Activated CD8-positive, alpha-beta T cell treated with anti-CD3 and anti-CD28 coated beads, Interleukin-2, amount 10 ng/mL, durations not matched to agents 7 days and 5 days (primary cell): ENCODE measurements at regions of chr14 and their contacts with region 1.

Region 1: DNA sequence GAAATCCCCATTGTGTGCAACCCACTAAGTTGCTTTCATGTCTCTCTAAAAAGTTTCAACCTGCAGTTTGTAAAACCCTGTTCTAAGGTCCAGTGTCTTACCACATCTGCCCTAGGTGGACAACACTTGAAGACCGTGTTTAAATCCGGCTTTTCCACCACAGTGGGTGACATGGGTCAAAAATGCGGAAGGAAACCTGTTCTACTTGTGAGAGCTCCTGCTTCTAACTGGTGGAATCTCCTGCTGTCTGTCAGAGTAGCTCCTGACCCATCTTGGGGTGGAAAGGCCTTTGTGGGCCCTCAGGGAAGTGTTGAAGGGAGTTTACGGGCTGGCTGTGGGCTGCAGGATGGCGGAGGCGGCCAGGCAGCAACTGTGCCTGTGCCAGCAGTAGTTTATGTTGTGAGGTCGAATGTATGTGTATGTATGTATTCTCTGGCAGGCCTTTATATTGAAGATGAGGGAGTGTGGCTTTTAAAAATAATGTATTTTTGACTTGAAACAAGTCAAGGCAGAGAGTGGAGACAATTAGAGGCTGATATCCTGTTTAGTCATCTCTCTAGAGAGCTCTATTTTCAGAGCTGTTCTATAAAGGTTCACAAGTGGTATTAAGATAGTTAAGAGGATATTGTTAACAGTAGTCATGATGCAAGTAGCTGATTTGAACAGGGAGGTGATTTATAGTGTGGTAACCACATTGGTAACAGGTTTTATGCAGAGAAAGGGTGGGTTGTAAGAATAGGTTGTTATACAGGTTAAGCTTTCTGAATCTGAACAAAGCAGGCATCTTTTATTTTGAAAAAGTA is 67.0 kb downstream of the PRKCH start:
- DNase-seq: peak; percentile 51
- ATAC-seq: peak; percentile 54
- H3K4me3 Mint-ChIP-seq: no peak overlapping the region
- H3K27ac Mint-ChIP-seq: no peak overlapping the region
- H3K4me1 Mint-ChIP-seq: no peaks in the 10 kb centered on the region
- H3K27me3 Mint-ChIP-seq: no peaks in the 10 kb centered on the region

Region 2: GRCh38 chr14:61064210-61064609 is 324.2 kb before region 1 on chr14:
- CTCF ChIA-PET with region 1: no interaction called
- POLR2A ChIA-PET with region 1: no interaction called
- DNase-seq: no peak
- ATAC-seq: no peak
- H3K4me3 Mint-ChIP-seq: no peak overlapping the region
- H3K27ac Mint-ChIP-seq: no peak overlapping the region
- H3K4me1 Mint-ChIP-seq: no peaks in the 10 kb centered on the region
- H3K27me3 Mint-ChIP-seq: no peaks in the 10 kb centered on the region

Region 3: GRCh38 chr14:61321385-61322010 is 66.9 kb before region 1 on chr14 and contains the start of gene PRKCH:
- CTCF ChIA-PET with region 1: interaction called, 4 read pairs
- POLR2A ChIA-PET with region 1: interaction called, 37 read pairs
- DNase-seq: peak; percentile 93
- ATAC-seq: peak; percentile 79
- H3K4me3 Mint-ChIP-seq: peak within 1 kb of the TSS; percentile 94
- H3K27ac Mint-ChIP-seq: peak within 1 kb of the TSS; percentile 92
- H3K4me1 Mint-ChIP-seq: peaks cover 22% of the 10 kb centered on the region
- H3K27me3 Mint-ChIP-seq: no peaks in the 10 kb centered on the region
- total RNA-seq, gene PRKCH: 318 to 343 TPM

Region 4: DNA sequence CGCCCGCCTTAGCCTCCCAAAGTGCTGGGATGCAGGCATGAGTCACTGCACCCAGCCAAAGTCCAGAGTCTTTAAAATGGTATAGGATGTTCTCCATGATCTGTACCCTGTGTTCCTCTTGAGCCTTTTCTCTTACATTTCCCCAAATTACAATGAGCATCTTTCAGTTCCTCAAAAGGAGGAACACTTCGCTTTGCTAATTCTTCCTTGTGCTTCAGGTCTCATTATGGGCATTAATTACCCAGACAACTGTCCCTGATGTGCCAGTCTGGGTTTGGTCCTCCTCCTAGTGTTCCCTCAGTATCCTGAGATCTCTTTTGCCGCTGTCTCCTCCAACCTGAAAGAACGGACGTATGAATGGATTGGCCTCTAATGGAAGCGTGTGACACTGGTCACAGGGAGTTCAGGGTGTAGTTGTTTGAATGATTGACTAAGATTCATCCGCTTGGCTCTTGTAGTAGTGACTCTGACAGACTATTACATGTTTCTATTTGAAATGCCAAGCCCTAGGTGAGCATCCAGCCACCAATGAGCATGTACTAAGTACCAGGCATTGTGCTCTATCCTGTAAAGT is 58.8 kb before region 1 on chr14:
- CTCF ChIA-PET with region 1: interaction called, 10 read pairs
- POLR2A ChIA-PET with region 1: interaction called, 25 read pairs
- DNase-seq: no peak
- ATAC-seq: no peak
- H3K4me3 Mint-ChIP-seq: peak overlapping the region; percentile 94
- H3K27ac Mint-ChIP-seq: peak overlapping the region; percentile 85
- H3K4me1 Mint-ChIP-seq: peaks cover 77% of the 10 kb centered on the region
- H3K27me3 Mint-ChIP-seq: no peaks in the 10 kb centered on the region

Region 5: GRCh38 chr14:61342486-61342885 is 45.9 kb before region 1 on chr14:
- CTCF ChIA-PET with region 1: interaction called, 10 read pairs
- POLR2A ChIA-PET with region 1: interaction called, 10 read pairs
- DNase-seq: peak; percentile 92
- ATAC-seq: peak; percentile 64
- H3K4me3 Mint-ChIP-seq: peak overlapping the region; percentile 72
- H3K27ac Mint-ChIP-seq: peak overlapping the region; percentile 90
- H3K4me1 Mint-ChIP-seq: peaks cover 95% of the 10 kb centered on the region
- H3K27me3 Mint-ChIP-seq: no peaks in the 10 kb centered on the region

Region 6: GRCh38 chr14:61350427-61351270 is 37.7 kb before region 1 on chr14:
- CTCF ChIA-PET with region 1: interaction called, 5 read pairs
- POLR2A ChIA-PET with region 1: interaction called, 14 read pairs
- DNase-seq: peak; percentile 62
- ATAC-seq: peak; percentile 38
- H3K4me3 Mint-ChIP-seq: peak overlapping the region; percentile 49
- H3K27ac Mint-ChIP-seq: peak overlapping the region; percentile 86
- H3K4me1 Mint-ChIP-seq: peaks cover 95% of the 10 kb centered on the region
- H3K27me3 Mint-ChIP-seq: no peaks in the 10 kb centered on the region

Region 7: GRCh38 chr14:61403411-61403810 is 15.0 kb after region 1 on chr14:
- CTCF ChIA-PET with region 1: interaction called, 32 read pairs
- POLR2A ChIA-PET with region 1: interaction called, 10 read pairs
- DNase-seq: peak; percentile 63
- ATAC-seq: peak; percentile 83
- H3K4me3 Mint-ChIP-seq: peak overlapping the region; percentile 67
- H3K27ac Mint-ChIP-seq: peak overlapping the region; percentile 92
- H3K4me1 Mint-ChIP-seq: peaks cover 89% of the 10 kb centered on the region
- H3K27me3 Mint-ChIP-seq: no peaks in the 10 kb centered on the region

Region 8: DNA sequence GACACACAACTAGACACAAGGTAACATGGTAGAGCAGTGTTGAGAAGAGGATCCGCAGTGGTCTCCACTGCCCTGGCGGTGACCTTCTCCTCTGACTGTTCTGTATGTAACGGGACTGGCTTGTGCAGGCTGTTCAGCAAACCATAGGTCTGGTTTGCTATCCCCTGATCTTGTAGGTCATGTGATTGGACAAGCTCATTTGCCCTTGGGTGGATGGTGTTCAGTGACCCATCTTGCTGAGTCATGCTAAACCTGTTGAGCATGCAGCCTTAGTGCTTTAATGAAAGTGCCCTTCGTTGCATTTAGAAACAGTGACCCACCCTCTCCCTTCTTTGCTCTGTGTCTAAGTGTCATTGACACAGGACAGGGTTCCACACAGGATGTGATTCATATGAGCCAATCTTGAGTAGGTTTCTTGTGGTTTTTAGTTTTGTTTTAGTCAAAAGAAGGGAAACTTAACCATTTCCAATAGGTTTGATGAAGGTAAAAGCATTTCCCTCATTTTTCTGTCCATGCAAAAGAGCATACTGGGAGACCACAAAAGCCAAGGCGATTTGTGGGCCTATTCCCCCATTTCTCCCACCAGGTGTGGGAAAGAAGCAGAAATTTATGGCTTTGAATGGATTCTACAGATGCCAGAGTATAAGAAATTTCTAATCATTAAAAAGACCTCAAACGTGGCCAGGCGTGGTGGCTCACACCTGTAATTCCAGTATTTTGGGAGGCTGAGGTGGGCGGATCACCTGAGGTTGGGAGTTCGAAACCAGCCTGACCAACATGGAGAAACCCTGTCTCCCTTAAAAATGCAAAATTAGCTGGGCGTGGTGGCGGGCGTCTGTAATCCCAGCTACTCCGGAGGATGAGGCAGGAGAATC is 274.3 kb after region 1 on chr14:
- CTCF ChIA-PET with region 1: no interaction called
- POLR2A ChIA-PET with region 1: no interaction called
- DNase-seq: peak; percentile 85
- ATAC-seq: peak; percentile 82
- H3K4me3 Mint-ChIP-seq: peak overlapping the region; percentile 71
- H3K27ac Mint-ChIP-seq: peak overlapping the region; percentile 98
- H3K4me1 Mint-ChIP-seq: peaks cover 73% of the 10 kb centered on the region
- H3K27me3 Mint-ChIP-seq: no peaks in the 10 kb centered on the region